Activated CD4-positive, alpha-beta memory T cell treated with anti-CD3 and anti-CD28 coated beads, Interleukin-2, amount 10 ng/mL, durations not matched to agents 7 days and 5 days (primary cell): ENCODE measurements at regions of chr2 and their contacts with region 1.

Region 1: DNA sequence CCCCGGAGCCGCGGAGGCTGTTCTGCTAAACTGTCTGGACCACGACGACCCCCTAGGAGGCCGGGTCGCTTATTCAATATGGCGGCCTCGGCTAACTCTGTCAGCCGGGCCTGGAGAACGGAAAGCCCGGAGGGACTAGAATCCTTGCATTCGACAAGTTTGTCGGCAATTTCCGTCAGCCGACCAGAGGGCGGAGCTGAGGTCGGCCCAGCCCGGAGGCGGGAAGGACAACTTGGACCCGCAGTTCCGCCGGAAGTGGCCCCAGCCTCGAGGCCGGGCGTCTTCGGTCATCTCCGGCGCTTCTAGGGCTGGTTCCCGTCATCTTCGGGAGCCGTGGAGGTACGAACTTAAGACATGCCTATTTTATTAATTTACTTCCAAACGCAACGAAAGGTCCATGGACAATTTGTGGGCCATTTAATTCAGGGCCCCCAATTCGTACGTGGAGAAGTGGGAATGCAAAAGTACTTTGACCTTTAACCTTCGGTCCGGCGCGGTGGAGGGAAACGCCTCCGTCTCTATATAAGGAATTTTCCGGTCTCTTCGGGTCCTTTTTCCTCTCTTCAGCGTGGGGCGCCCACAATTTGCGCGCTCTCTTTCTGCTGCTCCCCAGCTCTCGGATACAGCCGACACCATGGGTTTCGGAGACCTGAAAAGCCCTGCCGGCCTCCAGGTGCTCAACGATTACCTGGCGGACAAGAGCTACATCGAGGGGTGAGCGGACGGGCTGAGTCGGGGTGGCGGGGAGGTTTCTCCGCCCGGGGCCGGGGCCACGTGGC is at the starts of genes EEF1B2 and NDUFS1:
- DNase-seq: peak; percentile 98
- H3K4me3 Mint-ChIP-seq: peak within 1 kb of the TSS; percentile 94
- H3K27ac Mint-ChIP-seq: peak within 1 kb of the TSS; percentile 91
- H3K4me1 Mint-ChIP-seq: peaks cover 54% of the 10 kb centered on the region
- H3K27me3 Mint-ChIP-seq: no peaks in the 10 kb centered on the region
- total RNA-seq, gene EEF1B2: 473 to 489 TPM
- total RNA-seq, gene NDUFS1: 62.2 to 65.4 TPM

Region 2: DNA sequence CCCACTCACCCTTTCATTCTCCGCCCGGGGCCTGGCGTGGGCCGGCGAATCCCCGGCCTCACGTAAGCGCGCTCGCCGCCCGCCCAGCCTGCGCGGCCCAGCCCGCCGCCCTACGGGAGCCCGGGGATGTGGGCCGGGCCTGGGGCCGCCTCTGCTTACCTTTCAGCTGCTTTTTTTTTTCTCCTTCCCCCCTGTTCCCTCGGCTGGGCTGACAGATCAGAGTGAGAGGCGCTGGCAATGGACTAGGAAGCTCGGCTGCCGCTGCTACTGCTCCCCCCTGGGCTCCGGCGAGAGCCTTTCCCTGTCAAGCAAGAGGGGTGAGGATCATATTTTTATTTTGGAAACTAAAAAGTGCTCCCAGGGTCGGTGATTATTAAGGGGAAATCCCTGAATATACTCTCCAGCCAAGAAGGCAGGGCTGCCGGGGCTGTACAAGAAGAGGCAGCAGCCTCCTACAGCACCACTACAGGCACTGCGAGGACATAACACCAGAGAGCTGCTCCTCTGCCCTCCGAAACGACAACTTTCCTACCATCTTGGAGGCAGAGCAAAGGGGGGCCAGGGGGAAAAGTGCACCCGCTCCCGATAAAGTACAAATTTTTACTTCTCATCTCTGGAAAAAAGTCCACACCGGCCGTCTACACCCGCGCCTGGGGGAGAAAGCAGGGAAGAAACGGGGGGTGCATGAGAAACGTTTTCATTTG is 73.6 kb before region 1 on chr2 and contains the start of gene INO80D:
- CTCF ChIA-PET with region 1: interaction called, 9 read pairs
- POLR2A ChIA-PET with region 1: interaction called, 29 read pairs
- DNase-seq: peak; percentile 84
- H3K4me3 Mint-ChIP-seq: peak within 1 kb of the TSS; percentile 99
- H3K27ac Mint-ChIP-seq: peak within 1 kb of the TSS; percentile 100
- H3K4me1 Mint-ChIP-seq: peaks cover 32% of the 10 kb centered on the region
- H3K27me3 Mint-ChIP-seq: no peaks in the 10 kb centered on the region
- total RNA-seq, gene INO80D: 25.4 to 26.5 TPM

Region 3: GRCh38 chr2:206127656-206128055 is 31.9 kb before region 1 on chr2:
- CTCF ChIA-PET with region 1: no interaction called
- POLR2A ChIA-PET with region 1: no interaction called
- DNase-seq: no peak
- H3K4me3 Mint-ChIP-seq: no peak overlapping the region
- H3K27ac Mint-ChIP-seq: no peak overlapping the region
- H3K4me1 Mint-ChIP-seq: no peaks in the 10 kb centered on the region
- H3K27me3 Mint-ChIP-seq: no peaks in the 10 kb centered on the region

Region 4: GRCh38 chr2:206274434-206275268 is 115.1 kb after region 1 on chr2 and contains the start of gene ZDBF2:
- CTCF ChIA-PET with region 1: no interaction called
- POLR2A ChIA-PET with region 1: interaction called, 10 read pairs
- DNase-seq: peak; percentile 59
- H3K4me3 Mint-ChIP-seq: peak within 1 kb of the TSS; percentile 83
- H3K27ac Mint-ChIP-seq: peak within 1 kb of the TSS; percentile 76
- H3K4me1 Mint-ChIP-seq: peaks cover 20% of the 10 kb centered on the region
- H3K27me3 Mint-ChIP-seq: peaks cover 57% of the 10 kb centered on the region
- total RNA-seq, gene ZDBF2: 13.2 to 15.6 TPM